BJ (cell line): ENCODE measurements at regions of chr7 and their contacts with region 1.

Region 1: GRCh38 chr7:54773472-54774399 is 14.7 kb upstream of the SEC61G start:
- DNase-seq: peak; percentile 26
- H3K4me3 ChIP-seq: peak overlapping the region; percentile 34
- H3K27me3 ChIP-seq: no peaks in the 10 kb centered on the region
- CTCF ChIP-seq: peak; percentile 83

Region 2: DNA sequence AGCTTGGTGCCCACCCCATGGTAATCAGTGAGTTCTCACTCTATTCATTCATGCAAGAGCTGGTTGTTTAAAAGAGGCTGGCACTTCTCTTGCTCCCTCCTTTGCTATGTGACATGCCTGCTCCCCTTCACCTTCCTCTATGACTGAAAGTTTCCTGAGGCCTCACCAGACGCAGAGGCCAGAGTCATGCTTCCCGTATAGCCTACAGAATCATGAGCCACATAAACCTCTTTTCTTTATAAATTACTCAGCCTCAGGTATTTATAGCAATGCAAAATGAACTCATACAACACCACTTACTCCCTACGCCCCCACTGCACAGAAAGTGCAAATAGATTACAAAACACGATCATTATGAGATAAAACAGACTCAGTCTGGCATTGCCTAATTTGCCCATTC is 53.8 kb before region 1 on chr7:
- CTCF ChIA-PET with region 1: no interaction called
- POLR2A ChIA-PET with region 1: no interaction called
- DNase-seq: no peak
- H3K4me3 ChIP-seq: no peak overlapping the region
- H3K27me3 ChIP-seq: no peaks in the 10 kb centered on the region
- CTCF ChIP-seq: no peak

Region 3: DNA sequence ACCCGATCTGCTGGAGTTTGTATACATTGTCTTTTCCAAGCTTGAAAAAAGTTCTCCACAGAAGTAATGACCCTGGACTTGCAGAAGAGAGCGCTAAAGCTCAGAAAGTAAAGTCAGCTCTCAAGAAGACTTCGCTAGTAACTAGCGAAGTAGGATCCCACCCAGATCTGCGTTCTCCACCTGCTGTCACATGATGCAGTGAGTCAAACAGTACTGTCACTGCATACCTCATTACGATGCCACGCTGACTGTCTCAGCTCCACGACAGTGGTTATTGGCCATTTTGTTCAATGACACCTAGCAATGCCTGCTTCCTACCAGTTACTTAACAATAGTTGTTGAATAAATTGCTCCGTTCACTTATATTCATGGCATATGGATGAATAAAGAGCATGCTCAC is 14.9 kb after region 1 on chr7:
- CTCF ChIA-PET with region 1: interaction called, 32 read pairs
- POLR2A ChIA-PET with region 1: no interaction called
- DNase-seq: peak; percentile 51
- H3K4me3 ChIP-seq: no peak overlapping the region
- H3K27me3 ChIP-seq: no peaks in the 10 kb centered on the region
- CTCF ChIP-seq: peak; percentile 79

Region 4: GRCh38 chr7:54839538-54840213 is 65.9 kb after region 1 on chr7:
- CTCF ChIA-PET with region 1: interaction called, 33 read pairs
- POLR2A ChIA-PET with region 1: no interaction called
- DNase-seq: no peak
- H3K4me3 ChIP-seq: no peak overlapping the region
- H3K27me3 ChIP-seq: no peaks in the 10 kb centered on the region; the same call in 1 of the 2 replicates
- CTCF ChIP-seq: peak; percentile 81

Region 5: DNA sequence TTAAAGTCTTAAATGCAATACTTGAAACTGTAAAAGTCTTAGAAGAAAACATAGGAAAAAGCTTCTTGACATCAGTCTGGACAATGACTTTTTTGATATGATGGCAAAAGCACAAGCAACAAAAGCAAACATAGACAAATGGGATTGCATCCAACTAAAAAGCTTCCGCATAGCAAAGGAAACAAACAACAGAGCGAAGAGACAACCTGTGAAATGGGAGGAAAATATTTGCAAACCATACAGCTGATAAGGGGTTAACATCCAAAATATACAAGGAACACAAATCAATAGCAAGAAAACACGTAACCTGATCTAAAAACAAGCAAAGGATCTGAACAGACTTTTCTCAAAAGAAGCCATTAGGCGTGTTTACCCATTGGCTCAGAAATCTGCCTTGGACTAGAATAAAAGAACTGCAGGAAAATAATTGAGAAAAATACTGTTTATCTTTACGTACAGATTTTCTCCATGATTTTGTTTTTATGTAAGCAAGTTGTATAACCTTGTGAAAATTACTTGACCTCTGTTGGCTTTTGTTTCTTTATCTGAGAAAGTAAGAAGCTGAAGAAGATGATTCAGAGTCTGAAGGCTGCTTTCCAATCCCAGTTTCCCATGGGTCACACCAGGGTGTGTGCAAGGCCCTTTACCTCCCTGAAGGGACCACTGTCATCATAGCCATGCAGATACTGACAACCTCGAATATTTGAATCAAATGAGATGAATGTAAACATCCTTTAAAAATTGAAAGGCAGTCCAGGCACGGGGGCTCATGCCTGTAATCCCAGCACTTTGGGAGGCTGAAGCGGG is 492.3 kb after region 1 on chr7:
- CTCF ChIA-PET with region 1: interaction called, 48 read pairs
- POLR2A ChIA-PET with region 1: no interaction called
- DNase-seq: no peak
- H3K4me3 ChIP-seq: no peak overlapping the region
- H3K27me3 ChIP-seq: peaks cover 7% of the 10 kb centered on the region
- CTCF ChIP-seq: no peak

Region 6: DNA sequence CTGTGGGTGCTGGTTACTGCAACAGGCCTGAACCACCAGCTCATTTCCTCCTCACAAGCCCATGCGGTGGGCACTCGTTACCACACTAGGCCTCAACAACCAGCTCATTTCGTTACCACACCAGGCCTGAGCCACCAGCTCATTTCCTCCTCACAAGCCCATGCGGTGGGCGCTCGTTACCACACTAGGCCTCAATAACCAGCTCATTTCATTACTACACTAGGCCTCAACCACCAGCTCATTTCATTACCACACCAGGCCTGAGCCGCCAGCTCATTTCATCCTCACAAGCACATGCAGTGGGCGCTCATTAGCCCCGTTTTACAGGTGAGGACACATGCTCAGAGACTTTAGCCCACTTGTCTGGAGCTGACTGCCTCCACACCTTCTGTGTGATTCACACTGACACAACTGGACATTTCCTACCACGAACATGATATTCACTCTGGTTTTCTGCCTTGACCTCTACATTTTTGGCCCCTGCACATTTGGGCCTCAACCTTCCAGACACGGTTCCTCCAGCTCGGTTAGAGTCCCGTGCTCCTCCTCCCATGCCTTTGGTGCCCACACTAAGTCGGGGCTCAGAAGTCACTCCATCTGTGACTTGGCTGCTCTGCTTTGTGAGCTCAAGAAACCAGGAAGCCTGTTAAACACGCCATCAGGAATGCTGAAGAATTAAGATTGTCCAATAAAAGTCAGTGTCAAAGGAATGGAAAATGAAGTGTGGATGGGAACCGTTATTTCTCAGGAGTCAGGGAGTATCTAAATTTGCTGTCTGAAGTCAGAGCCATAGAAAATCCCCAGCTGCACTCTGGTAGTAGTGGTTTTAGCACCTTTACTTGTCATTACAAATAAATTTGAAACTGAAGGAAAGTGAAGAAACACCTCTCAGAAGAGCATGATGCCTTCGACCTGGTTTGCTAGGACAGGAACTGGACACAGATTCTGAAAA is 535.6 kb after region 1 on chr7:
- CTCF ChIA-PET with region 1: interaction called, 11 read pairs
- POLR2A ChIA-PET with region 1: no interaction called
- DNase-seq: no peak
- H3K4me3 ChIP-seq: no peak overlapping the region
- H3K27me3 ChIP-seq: no peaks in the 10 kb centered on the region
- CTCF ChIP-seq: no peak